ENCODE measurements at regions of chr12 and their contacts with region 1.

Region 1: DNA sequence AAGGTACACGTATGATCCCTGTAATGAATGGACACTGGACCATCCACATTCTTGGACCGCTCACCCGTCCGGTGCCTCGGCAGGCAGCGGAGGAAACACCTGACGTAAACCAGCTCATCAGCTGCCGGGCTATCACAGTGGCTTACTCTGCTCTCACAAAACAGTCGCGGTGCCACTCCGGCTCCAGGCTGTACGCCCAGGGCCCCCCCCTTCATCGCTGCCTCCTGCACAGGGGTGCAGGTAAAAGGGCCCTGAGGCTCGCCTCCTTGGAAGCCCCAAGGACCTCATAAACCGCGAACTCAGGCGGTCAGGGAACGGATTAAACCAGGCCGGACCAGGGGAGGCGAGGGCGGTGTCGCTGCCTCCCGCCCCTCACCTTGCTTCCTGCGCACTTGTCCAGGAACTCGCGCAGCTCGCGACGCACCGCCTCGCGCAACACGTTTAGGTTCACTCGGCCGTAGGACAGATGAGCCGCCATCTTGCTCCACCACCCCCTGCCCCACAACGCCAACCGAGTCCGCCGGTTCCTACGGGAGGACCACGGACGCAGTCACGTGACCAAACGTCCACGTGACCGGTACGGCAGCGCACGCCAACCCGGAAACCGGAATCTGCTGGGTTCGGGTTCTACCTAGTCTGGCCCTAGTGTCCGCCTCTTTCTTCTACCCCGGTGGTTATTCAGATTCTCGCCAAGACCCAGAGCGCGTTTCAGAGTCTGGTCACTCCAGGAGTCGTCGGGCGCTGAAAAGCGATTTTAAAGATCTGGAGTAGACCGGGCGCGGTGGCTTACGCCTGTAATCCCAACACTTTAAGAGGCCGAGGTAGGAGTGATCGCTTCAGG is at the start of gene VPS33A:
- H3K4me3 Mint-ChIP-seq: peak within 1 kb of the TSS; percentile 96
- H3K27ac Mint-ChIP-seq: peak within 1 kb of the TSS; percentile 94
- H3K4me1 Mint-ChIP-seq: peaks cover 5% of the 10 kb centered on the region
- H3K27me3 Mint-ChIP-seq: no peaks in the 10 kb centered on the region

Region 2: GRCh38 chr12:122225683-122226407 is 40.3 kb before region 1 on chr12 and contains the start of gene DIABLO:
- intact Hi-C with region 1: loop called (anchors 5 kb)
- H3K4me3 Mint-ChIP-seq: peak within 1 kb of the TSS; percentile 90
- H3K27ac Mint-ChIP-seq: peak within 1 kb of the TSS; percentile 97
- H3K4me1 Mint-ChIP-seq: peaks cover 38% of the 10 kb centered on the region
- H3K27me3 Mint-ChIP-seq: no peaks in the 10 kb centered on the region

Region 3: GRCh38 chr12:122306407-122306806 is 40.3 kb after region 1 on chr12:
- intact Hi-C with region 1: no loop called
- H3K4me3 Mint-ChIP-seq: no peak overlapping the region
- H3K27ac Mint-ChIP-seq: no peak overlapping the region
- H3K4me1 Mint-ChIP-seq: no peaks in the 10 kb centered on the region
- H3K27me3 Mint-ChIP-seq: no peaks in the 10 kb centered on the region

Region 4: GRCh38 chr12:122500685-122501488 is 234.7 kb after region 1 on chr12 and contains the start of gene ZCCHC8:
- intact Hi-C with region 1: loop called (anchors 2 kb)
- H3K4me3 Mint-ChIP-seq: peak within 1 kb of the TSS; percentile 98
- H3K27ac Mint-ChIP-seq: peak within 1 kb of the TSS; percentile 98
- H3K4me1 Mint-ChIP-seq: peaks cover 39% of the 10 kb centered on the region
- H3K27me3 Mint-ChIP-seq: no peaks in the 10 kb centered on the region

Region 5: DNA sequence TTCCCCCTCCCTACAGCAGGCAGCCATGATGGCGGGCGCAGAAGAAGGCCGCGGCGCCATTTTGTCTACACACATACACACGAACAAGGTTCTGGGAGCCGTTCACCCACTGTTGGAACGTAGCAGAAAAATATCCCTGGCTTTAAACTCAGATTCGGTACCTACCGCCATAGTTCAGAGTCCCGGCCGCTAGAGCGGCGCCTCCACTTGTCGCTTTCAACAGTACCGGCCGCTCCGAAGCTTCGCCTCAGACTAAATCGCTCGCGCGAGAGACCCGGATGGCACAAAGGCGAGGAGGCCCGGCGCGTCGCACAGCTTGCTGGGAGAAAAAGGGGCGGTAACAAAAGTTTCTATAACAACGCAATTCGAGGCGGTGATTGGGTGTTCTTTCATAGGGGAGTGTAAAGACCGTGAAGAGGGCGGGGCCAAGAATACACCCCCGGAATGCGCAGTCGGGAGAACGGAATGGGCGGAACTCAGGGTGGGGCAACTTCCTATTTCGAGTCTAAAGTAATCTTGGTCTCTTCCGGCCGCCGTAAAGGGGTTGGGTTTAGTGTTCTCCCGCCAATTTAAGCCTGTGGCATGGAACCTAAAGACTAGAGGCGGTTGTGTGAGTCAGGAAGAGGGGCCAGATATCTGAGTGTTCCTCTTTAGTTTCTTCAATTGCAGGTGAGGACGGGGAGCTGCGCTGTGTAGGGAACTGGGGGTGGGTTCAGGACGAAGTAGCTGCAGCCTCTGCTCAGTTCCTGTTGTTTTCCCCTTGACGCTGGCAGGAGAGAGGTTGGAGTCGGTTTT is 260.7 kb after region 1 on chr12 and contains the starts of genes KNTC1 and RSRC2:
- intact Hi-C with region 1: loop called (anchors 1 kb)
- H3K4me3 Mint-ChIP-seq: no peak within 1 kb of the TSS
- H3K27ac Mint-ChIP-seq: no peak within 1 kb of the TSS
- H3K4me1 Mint-ChIP-seq: peaks cover 9% of the 10 kb centered on the region
- H3K27me3 Mint-ChIP-seq: no peaks in the 10 kb centered on the region

Measured in dendritic cell treated with granulocyte-macrophage colony-stimulating factor and Interleukin-4, amounts not matched to agents 40 ng/mL and 50 ng/mL, for 4 days (primary cell).